A673 (cell line): ENCODE measurements at regions of chr1 and their contacts with region 1.

Region 1: GRCh38 chr1:70509996-70510876 is 99.2 kb downstream of the CTH start:
- DNase-seq: peak; percentile 96
- H3K4me3 ChIP-seq: no peak overlapping the region
- H3K27ac ChIP-seq: no peak overlapping the region
- H3K4me1 ChIP-seq: peaks cover 11% of the 10 kb centered on the region
- H3K27me3 ChIP-seq: no peaks in the 10 kb centered on the region
- CTCF ChIP-seq: peak; percentile 80

Region 2: GRCh38 chr1:70134148-70134547 is 376.1 kb before region 1 on chr1:
- CTCF ChIA-PET with region 1: no interaction called
- POLR2A ChIA-PET with region 1: no interaction called
- intact Hi-C with region 1: loop called (anchors 5 kb)
- DNase-seq: no peak
- H3K4me3 ChIP-seq: no peak overlapping the region
- H3K27ac ChIP-seq: no peak overlapping the region
- H3K4me1 ChIP-seq: no peaks in the 10 kb centered on the region
- H3K27me3 ChIP-seq: no peaks in the 10 kb centered on the region
- CTCF ChIP-seq: no peak

Region 3: DNA sequence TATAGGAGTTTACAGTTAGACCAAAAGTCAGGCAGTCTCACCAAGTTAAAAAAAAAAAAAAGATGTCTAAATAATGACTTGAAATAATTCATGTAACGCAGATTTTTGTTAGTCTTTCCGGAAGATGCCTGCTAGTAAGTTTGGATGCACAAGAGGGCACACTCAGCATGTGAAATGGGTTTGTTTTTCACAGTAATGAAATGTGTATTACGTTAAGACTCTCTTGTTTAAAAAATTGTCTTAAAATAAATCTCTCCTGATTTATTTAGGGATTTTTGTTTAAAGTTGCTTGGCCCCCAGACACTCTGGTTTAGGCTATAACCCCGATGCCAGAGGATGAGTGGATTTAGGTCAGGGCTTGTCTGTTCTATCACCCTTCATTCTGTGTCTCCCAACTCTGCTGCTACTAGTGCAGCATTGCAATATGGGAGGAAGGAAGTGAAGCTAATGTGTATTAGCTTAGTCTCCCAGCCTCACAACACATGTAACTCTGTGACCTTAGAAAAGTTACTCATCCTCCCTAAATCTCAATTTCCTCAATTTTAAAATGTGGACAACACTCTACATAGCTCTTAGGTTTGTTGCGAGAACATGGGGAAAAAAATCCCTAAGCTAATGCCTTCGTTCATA is 73.5 kb before region 1 on chr1:
- CTCF ChIA-PET with region 1: no interaction called
- POLR2A ChIA-PET with region 1: no interaction called
- intact Hi-C with region 1: loop called (anchors 5 kb)
- DNase-seq: peak; percentile 64
- H3K4me3 ChIP-seq: no peak overlapping the region
- H3K27ac ChIP-seq: no peak overlapping the region
- H3K4me1 ChIP-seq: peaks cover 9% of the 10 kb centered on the region
- H3K27me3 ChIP-seq: no peaks in the 10 kb centered on the region
- CTCF ChIP-seq: peak; percentile 66